ENCODE measurements at regions of chr7 and their contacts with region 1.

Region 1: GRCh38 chr7:34659472-34660075 is 1.6 kb downstream of the NPSR1 start:
- DNase-seq: no peak
- ATAC-seq: no peak
- H3K4me3 ChIP-seq: no peak overlapping the region
- H3K27ac ChIP-seq: no peak overlapping the region
- H3K4me1 ChIP-seq: no peaks in the 10 kb centered on the region
- CTCF ChIP-seq: no peak
- EP300 ChIP-seq: no peak
- POLR2A ChIP-seq: no peak
- RAD21 ChIP-seq: no peak

Region 2: GRCh38 chr7:34675749-34676374 is 16.3 kb after region 1 on chr7:
- CTCF ChIA-PET with region 1: interaction called, 12 read pairs
- POLR2A ChIA-PET with region 1: no interaction called
- DNase-seq: peak; percentile 32 to 48
- ATAC-seq: peak; percentile 74 to 88; a peak in 3 of 6 replicates
- H3K4me3 ChIP-seq: no peak overlapping the region
- H3K27ac ChIP-seq: no peak overlapping the region
- H3K4me1 ChIP-seq: no peaks in the 10 kb centered on the region
- CTCF ChIP-seq: peak; percentile 69
- EP300 ChIP-seq: no peak
- POLR2A ChIP-seq: no peak
- RAD21 ChIP-seq: peak; percentile 82 to 85

Measured in A549 (cell line).